CD4-positive, alpha-beta memory T cell (primary cell): ENCODE measurements at regions of chr12 and their contacts with region 1.

Region 1: GRCh38 chr12:11648831-11649702 is at the start of gene ETV6:
- DNase-seq: peak; percentile 79 to 84 (median 81)
- H3K4me3 ChIP-seq: peak within 1 kb of the TSS; percentile 59 to 97
- H3K4me3 Mint-ChIP-seq: peak within 1 kb of the TSS; percentile 95 to 99 (median 98)
- H3K27ac ChIP-seq: peak within 1 kb of the TSS; percentile 79
- H3K27ac Mint-ChIP-seq: peak within 1 kb of the TSS; percentile 85 to 99 (median 98)
- H3K4me1 ChIP-seq: peaks cover 32% of the 10 kb centered on the region
- H3K4me1 Mint-ChIP-seq: peaks cover 24 to 48% (median 27%) of the 10 kb centered on the region in 4 donors
- H3K27me3 ChIP-seq: no peaks in the 10 kb centered on the region
- H3K27me3 Mint-ChIP-seq: no peaks in the 10 kb centered on the region
- total RNA-seq, gene ETV6: 41.3 to 43.9 TPM

Region 2: GRCh38 chr12:11581179-11581755 is 67.8 kb before region 1 on chr12:
- CTCF ChIA-PET with region 1: interaction called, 4 read pairs
- POLR2A ChIA-PET with region 1: no interaction called
- intact Hi-C with region 1: loop called (anchors 5 kb)
- DNase-seq: peak; percentile 62 to 71 (median 67)
- H3K4me3 ChIP-seq: no peak overlapping the region
- H3K4me3 Mint-ChIP-seq: peak overlapping the region in 1 of 8 donors; percentile 59
- H3K27ac ChIP-seq: no peak overlapping the region
- H3K27ac Mint-ChIP-seq: peak overlapping the region in 1 of 7 donors; percentile 79
- H3K4me1 ChIP-seq: peaks cover 3% of the 10 kb centered on the region
- H3K4me1 Mint-ChIP-seq: peaks cover 0 to 4% (median 3%) of the 10 kb centered on the region in 4 donors
- H3K27me3 ChIP-seq: no peaks in the 10 kb centered on the region
- H3K27me3 Mint-ChIP-seq: peaks cover 2 to 3% of the 10 kb centered on the region in 2 donors

Region 3: GRCh38 chr12:11724888-11725311 is 75.8 kb after region 1 on chr12:
- CTCF ChIA-PET with region 1: no interaction called
- POLR2A ChIA-PET with region 1: interaction called, 8 read pairs
- intact Hi-C with region 1: loop called (anchors 2 kb)
- DNase-seq: no peak
- H3K4me3 ChIP-seq: no peak overlapping the region
- H3K4me3 Mint-ChIP-seq: peak overlapping the region in 1 of 8 donors; percentile 17
- H3K27ac ChIP-seq: no peak overlapping the region
- H3K27ac Mint-ChIP-seq: peak overlapping the region in 4 of 7 donors; percentile 6 to 55 (median 40)
- H3K4me1 ChIP-seq: peaks cover 61% of the 10 kb centered on the region
- H3K4me1 Mint-ChIP-seq: peaks cover 43 to 85% (median 69%) of the 10 kb centered on the region in 4 donors
- H3K27me3 ChIP-seq: no peaks in the 10 kb centered on the region
- H3K27me3 Mint-ChIP-seq: no peaks in the 10 kb centered on the region

Region 4: DNA sequence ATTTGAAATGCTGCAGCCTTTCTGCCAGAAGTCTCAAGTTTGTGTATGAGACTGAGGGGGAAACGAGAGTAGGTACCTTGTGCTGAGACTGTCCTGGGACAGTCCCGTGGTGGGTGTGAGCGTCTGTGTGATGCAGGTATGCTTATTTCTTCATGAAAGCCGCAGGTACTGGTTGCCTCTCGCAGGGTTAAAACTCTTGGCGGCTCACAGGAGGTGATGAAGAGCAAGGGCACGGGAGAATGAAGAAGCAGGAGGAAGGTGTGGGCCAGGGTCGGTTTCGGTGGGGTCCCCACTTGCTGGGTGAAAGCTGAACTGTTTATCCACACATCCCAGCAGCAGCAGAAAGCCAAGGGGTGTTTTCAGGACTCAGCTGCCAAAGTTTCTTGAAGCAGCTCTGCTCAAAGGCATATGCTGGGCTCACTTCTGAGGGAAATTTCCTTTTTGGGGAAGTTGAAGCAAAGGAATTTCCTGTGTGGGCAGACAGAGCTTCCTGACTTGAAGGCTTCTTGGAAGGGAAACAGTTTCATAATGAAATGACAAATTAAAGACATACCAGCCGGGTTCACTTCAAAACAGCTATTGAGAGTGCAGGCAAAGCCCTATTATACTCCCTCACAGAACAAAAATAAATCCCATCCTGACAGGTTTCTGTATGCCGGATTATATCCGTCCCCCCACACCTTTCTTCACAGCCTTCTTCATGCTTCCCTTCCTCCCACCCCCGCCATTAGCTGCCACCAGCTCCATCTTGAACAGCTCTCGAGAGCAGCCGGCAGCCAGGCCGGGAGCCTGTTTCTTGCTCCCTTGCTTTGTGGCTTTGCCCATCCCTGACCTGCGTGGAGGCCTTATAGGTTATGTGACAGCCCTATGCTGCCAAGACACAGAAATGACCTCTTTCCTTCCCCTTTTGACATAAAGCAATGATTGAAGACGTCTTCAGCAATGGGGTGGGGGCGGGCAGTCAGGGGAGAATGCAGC is 117.0 kb after region 1 on chr12:
- CTCF ChIA-PET with region 1: no interaction called
- POLR2A ChIA-PET with region 1: interaction called, 4 read pairs
- intact Hi-C with region 1: loop called (anchors 5 kb)
- DNase-seq: peak; percentile 14 to 51 (median 25)
- H3K4me3 ChIP-seq: no peak overlapping the region
- H3K4me3 Mint-ChIP-seq: peak overlapping the region; percentile 49 to 87 (median 80)
- H3K27ac ChIP-seq: peak overlapping the region; percentile 27
- H3K27ac Mint-ChIP-seq: peak overlapping the region; percentile 78 to 91 (median 86)
- H3K4me1 ChIP-seq: peaks cover 95% of the 10 kb centered on the region
- H3K4me1 Mint-ChIP-seq: peaks cover 69 to 99% (median 86%) of the 10 kb centered on the region in 4 donors
- H3K27me3 ChIP-seq: no peaks in the 10 kb centered on the region
- H3K27me3 Mint-ChIP-seq: no peaks in the 10 kb centered on the region

Region 5: GRCh38 chr12:11981121-11981733 is 332.2 kb after region 1 on chr12:
- CTCF ChIA-PET with region 1: no interaction called
- POLR2A ChIA-PET with region 1: interaction called, 12 read pairs
- intact Hi-C with region 1: loop called (anchors 1 kb)
- DNase-seq: peak; percentile 86 to 94 (median 88)
- H3K4me3 ChIP-seq: peak overlapping the region; percentile 4 to 29
- H3K4me3 Mint-ChIP-seq: peak overlapping the region; percentile 2 to 74 (median 70)
- H3K27ac ChIP-seq: peak overlapping the region; percentile 74
- H3K27ac Mint-ChIP-seq: peak overlapping the region; percentile 88 to 99 (median 97)
- H3K4me1 ChIP-seq: peaks cover 59% of the 10 kb centered on the region
- H3K4me1 Mint-ChIP-seq: peaks cover 47 to 61% (median 57%) of the 10 kb centered on the region in 4 donors
- H3K27me3 ChIP-seq: no peaks in the 10 kb centered on the region
- H3K27me3 Mint-ChIP-seq: no peaks in the 10 kb centered on the region

Region 6: DNA sequence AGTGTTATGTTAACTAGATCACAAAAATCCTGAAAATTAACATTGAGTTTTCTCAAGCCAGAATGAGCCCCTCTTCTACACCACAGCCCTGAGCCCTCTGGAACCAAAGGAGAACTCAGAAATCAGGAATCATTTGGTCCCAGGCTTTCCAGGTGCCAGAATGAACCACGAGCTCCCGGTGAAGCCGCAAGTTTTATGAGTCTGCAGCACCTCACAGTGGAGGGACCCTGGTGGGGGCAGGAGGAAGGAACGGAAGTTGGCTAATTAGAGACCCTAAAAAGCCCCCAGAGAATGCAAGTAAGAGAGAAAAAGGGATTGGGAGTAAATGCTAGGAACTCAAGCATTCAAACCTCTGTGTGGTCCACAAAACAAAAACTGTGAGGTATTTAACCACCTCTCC is 368.7 kb after region 1 on chr12:
- CTCF ChIA-PET with region 1: no interaction called
- POLR2A ChIA-PET with region 1: no interaction called
- intact Hi-C with region 1: no loop called
- DNase-seq: no peak
- H3K4me3 ChIP-seq: no peak overlapping the region
- H3K4me3 Mint-ChIP-seq: no peak overlapping the region
- H3K27ac ChIP-seq: no peak overlapping the region
- H3K27ac Mint-ChIP-seq: peak overlapping the region in 2 of 7 donors; percentile 14 to 77
- H3K4me1 ChIP-seq: peaks cover 26% of the 10 kb centered on the region
- H3K4me1 Mint-ChIP-seq: peaks cover 27 to 55% (median 47%) of the 10 kb centered on the region in 4 donors
- H3K27me3 ChIP-seq: no peaks in the 10 kb centered on the region
- H3K27me3 Mint-ChIP-seq: no peaks in the 10 kb centered on the region